CD4-positive, alpha-beta memory T cell (primary cell): ENCODE measurements at regions of chr13 and their contacts with region 1.

Region 1: DNA sequence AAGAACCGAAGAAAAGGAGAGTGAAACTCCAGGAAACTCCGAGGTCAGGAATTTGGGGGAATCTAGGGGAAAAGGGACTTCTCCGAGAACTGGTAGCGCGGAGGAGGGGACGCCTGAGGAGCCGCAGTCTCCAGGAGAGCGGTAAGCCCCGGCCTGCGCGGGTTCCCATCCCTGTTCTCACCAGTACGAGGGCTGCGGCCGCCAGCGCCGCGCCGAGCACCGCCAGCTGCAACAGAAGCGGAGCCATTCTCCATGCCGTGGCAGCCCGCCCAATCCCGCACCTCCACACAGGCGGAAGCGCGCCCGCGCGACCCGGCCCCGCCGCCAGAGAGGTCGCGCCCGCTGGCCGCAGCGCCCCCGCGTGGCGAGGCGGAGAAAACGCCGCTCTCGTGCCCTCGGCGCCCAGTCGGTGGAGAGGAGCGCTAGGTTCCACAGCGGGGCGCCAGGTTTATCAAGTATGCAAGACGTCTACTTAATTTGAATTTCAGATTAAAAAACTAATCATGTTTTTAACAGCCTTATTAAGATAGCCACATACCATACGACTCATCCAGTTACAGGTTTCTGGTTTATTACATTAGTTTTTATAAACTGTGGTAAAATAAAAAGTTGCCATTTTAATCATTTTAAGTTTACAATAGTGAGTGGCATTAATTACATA is at the start of gene ALG5:
- DNase-seq: peak; percentile 93 to 97 (median 95)
- H3K4me3 ChIP-seq: peak within 1 kb of the TSS; percentile 90 to 91
- H3K4me3 Mint-ChIP-seq: peak within 1 kb of the TSS; percentile 98 to 100 (median 100)
- H3K27ac ChIP-seq: peak within 1 kb of the TSS; percentile 92
- H3K27ac Mint-ChIP-seq: peak within 1 kb of the TSS; percentile 99 to 100 (median 100)
- H3K4me1 ChIP-seq: peaks cover 32% of the 10 kb centered on the region
- H3K4me1 Mint-ChIP-seq: peaks cover 27 to 64% (median 38%) of the 10 kb centered on the region in 4 donors
- H3K27me3 ChIP-seq: no peaks in the 10 kb centered on the region
- H3K27me3 Mint-ChIP-seq: no peaks in the 10 kb centered on the region
- total RNA-seq, gene ALG5: 23.3 to 25.5 TPM

Region 2: GRCh38 chr13:36818804-36819738 is 180.1 kb before region 1 on chr13 and contains the start of gene RFXAP:
- CTCF ChIA-PET with region 1: no interaction called
- POLR2A ChIA-PET with region 1: no interaction called
- intact Hi-C with region 1: loop called (anchors 1 kb)
- DNase-seq: peak; percentile 87 to 92 (median 90)
- H3K4me3 ChIP-seq: peak within 1 kb of the TSS; percentile 76 to 86
- H3K4me3 Mint-ChIP-seq: peak within 1 kb of the TSS; percentile 91 to 97 (median 95)
- H3K27ac ChIP-seq: peak within 1 kb of the TSS; percentile 85
- H3K27ac Mint-ChIP-seq: peak within 1 kb of the TSS; percentile 85 to 96 (median 95)
- H3K4me1 ChIP-seq: peaks cover 46% of the 10 kb centered on the region
- H3K4me1 Mint-ChIP-seq: peaks cover 33 to 56% (median 42%) of the 10 kb centered on the region in 4 donors
- H3K27me3 ChIP-seq: no peaks in the 10 kb centered on the region
- H3K27me3 Mint-ChIP-seq: peaks cover 0 to 8% of the 10 kb centered on the region in 2 donors
- total RNA-seq, gene RFXAP: 8.8 to 9.9 TPM

Region 3: GRCh38 chr13:37011002-37011401 is 11.8 kb after region 1 on chr13:
- CTCF ChIA-PET with region 1: interaction called, 10 read pairs
- POLR2A ChIA-PET with region 1: interaction called, 38 read pairs
- intact Hi-C with region 1: no loop called
- DNase-seq: no peak
- H3K4me3 ChIP-seq: no peak overlapping the region
- H3K4me3 Mint-ChIP-seq: no peak overlapping the region
- H3K27ac ChIP-seq: no peak overlapping the region
- H3K27ac Mint-ChIP-seq: no peak overlapping the region
- H3K4me1 ChIP-seq: no peaks in the 10 kb centered on the region
- H3K4me1 Mint-ChIP-seq: peaks cover 0 to 8% (median 2%) of the 10 kb centered on the region in 4 donors
- H3K27me3 ChIP-seq: no peaks in the 10 kb centered on the region
- H3K27me3 Mint-ChIP-seq: no peaks in the 10 kb centered on the region

Region 4: GRCh38 chr13:37058910-37059847 is 60.0 kb after region 1 on chr13 and contains the start of gene SUPT20H:
- CTCF ChIA-PET with region 1: interaction called, 5 read pairs
- POLR2A ChIA-PET with region 1: interaction called, 49 read pairs
- intact Hi-C with region 1: loop called (anchors 1 kb)
- DNase-seq: peak; percentile 89 to 92 (median 90)
- H3K4me3 ChIP-seq: peak within 1 kb of the TSS; percentile 72 to 77
- H3K4me3 Mint-ChIP-seq: peak within 1 kb of the TSS; percentile 91 to 97 (median 96)
- H3K27ac ChIP-seq: peak within 1 kb of the TSS; percentile 95
- H3K27ac Mint-ChIP-seq: peak within 1 kb of the TSS; percentile 98 to 99 (median 99)
- H3K4me1 ChIP-seq: peaks cover 23% of the 10 kb centered on the region
- H3K4me1 Mint-ChIP-seq: peaks cover 14 to 56% (median 29%) of the 10 kb centered on the region in 4 donors
- H3K27me3 ChIP-seq: no peaks in the 10 kb centered on the region
- H3K27me3 Mint-ChIP-seq: no peaks in the 10 kb centered on the region
- total RNA-seq, gene SUPT20H: 104 to 105 TPM